Esophagus muscularis mucosa (tissue), 4 donors: ENCODE measurements at regions of chr17 and their contacts with region 1.

Region 1: DNA sequence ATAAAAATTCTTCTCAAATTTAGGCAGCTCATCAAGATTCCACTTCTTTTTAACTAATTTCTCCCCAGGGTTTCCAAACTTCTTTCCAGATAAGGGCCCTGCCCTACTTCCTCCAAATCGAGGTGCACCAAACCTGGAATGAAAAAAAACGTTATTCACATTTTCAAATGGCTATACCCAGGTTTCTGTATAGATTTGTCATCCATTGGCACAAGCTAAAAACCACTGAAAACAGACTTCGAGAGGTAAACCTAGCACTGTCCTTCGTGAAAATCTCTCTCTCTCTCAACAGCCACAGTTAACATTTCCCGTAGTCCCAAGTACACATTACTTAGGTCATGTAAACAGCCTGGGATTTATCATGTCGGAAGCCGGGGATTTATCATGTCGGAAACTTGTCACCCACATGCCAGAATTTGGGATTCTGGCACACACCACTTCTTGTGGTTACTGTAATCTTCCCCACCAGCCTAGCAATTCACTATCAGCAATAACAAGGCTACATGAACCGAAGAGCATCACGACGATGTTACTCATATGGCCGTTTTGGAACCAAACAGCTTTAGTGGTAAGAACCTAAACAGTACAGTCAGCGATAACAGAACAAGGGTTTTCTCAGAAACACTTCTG is 1.3 kb downstream of the DDX5 start:
- DNase-seq: no peak
- H3K4me3 ChIP-seq: peak overlapping the region; percentile 77 to 94 (median 90)
- H3K27ac ChIP-seq: peak overlapping the region; percentile 99 to 100 (median 99)
- H3K4me1 ChIP-seq: peaks cover 61 to 74% (median 71%) of the 10 kb centered on the region in 4 donors
- H3K27me3 ChIP-seq: no peaks in the 10 kb centered on the region
- CTCF ChIP-seq: no peak
- EP300 ChIP-seq: no peak
- POLR2A ChIP-seq: no peak

Region 2: DNA sequence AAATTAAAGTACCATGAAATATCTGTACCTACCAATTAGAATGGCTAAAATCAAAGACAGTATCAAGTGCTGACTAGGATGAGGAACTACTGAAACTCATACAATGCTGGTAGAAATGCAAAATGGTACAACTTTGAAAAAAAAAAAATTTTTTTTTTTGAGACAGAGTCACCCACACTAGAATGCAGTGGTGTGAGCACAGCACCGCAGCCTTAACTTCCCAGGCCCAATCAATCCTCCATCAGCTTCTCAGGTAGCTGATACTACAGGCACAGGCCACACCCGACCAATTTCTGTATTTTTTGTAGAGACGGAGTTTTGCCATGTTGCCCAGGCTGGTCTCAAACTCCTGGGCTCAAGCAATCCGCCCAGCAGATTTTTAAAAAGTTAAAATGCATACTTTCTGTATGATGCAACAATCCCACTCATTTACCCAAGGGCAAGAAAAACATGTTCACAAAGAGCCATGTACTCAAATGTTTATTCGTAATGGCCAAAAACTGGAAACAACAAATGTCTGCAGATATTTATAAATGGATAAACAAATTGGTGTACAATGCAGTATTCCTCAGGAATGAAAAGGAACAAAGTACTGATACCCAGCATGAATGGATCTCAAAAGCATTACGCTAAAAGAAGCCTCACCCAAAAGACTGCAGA is 148.6 kb after region 1 on chr17:
- intact Hi-C with region 1: loop called (anchors 5 kb)
- DNase-seq: no peak
- H3K4me3 ChIP-seq: no peak overlapping the region
- H3K27ac ChIP-seq: no peak overlapping the region
- H3K4me1 ChIP-seq: peaks cover 9 to 76% (median 70%) of the 10 kb centered on the region in 4 donors
- H3K27me3 ChIP-seq: no peaks in the 10 kb centered on the region
- CTCF ChIP-seq: no peak
- EP300 ChIP-seq: no peak
- POLR2A ChIP-seq: no peak